ENCODE measurements at regions of chr3 and their contacts with region 1.

Region 1: DNA sequence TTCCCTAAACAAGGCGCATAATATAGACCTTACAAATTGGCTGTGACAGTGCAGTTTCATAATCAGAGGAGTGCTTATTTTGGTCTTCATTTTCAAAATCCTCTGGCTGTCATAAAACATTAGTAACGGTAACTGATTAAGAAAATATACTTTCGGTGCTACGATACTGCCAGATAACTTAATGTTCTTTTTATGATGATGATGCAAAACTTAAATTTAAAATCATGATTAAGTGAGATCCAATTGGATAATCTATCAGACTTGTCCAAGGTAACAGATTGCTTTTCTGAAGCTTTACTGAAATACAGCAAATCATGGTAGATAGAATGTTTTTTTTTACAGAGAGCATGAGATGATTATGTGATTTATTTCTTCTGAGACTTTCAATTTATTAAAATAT is 364.2 kb upstream of the CNTN3 start:
- DNase-seq: no peak
- H3K4me3 ChIP-seq: no peak overlapping the region
- H3K27ac ChIP-seq: no peak overlapping the region
- H3K4me1 ChIP-seq: no peaks in the 10 kb centered on the region
- H3K27me3 ChIP-seq: no peaks in the 10 kb centered on the region
- CTCF ChIP-seq: no peak
- POLR2A ChIP-seq: no peak

Region 2: DNA sequence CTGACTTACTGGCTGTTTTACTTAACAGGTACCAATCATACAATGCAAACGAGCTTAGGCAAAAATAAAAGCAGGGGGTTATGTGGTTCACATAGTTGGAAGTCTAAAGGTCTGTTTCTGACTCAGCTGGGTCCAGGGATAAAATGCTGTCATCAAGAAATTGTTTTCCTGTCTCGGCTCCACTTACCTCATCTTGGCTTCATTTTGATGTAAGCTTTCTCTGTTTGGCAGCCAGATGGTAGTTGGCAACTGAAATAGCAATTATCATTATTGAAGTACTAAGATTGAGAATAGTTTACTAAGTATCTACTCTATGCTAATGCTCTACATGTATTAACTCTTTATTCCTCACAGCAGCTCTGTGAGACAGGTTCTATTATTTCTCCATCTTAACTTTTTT is 327.4 kb before region 1 on chr3:
- CTCF ChIA-PET with region 1: no interaction called
- POLR2A ChIA-PET with region 1: no interaction called
- dilution Hi-C with region 1: no loop called
- intact Hi-C with region 1: no loop called
- DNase-seq: no peak
- H3K4me3 ChIP-seq: no peak overlapping the region
- H3K27ac ChIP-seq: no peak overlapping the region
- H3K4me1 ChIP-seq: no peaks in the 10 kb centered on the region
- H3K27me3 ChIP-seq: no peaks in the 10 kb centered on the region
- CTCF ChIP-seq: no peak
- POLR2A ChIP-seq: no peak

Region 3: DNA sequence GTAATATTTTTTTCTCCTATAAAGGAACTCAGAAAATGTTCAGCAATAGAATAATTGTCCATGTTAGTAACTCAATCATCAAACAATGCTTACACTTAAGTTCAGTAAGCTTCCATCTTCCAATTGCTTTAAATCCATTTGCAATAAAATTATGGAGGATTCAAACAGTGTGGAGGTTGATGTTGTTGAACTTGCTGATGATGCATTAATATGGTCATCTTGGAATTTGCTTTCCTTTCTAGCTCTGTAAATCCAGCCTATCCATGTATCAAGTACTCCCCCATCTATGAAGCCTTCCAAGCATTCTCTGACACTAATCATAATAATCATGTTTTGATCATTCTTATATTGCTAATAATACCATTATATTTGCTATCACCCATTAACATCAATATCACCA is 14.2 kb after region 1 on chr3:
- CTCF ChIA-PET with region 1: no interaction called
- POLR2A ChIA-PET with region 1: no interaction called
- dilution Hi-C with region 1: no loop called
- intact Hi-C with region 1: no loop called
- DNase-seq: no peak
- H3K4me3 ChIP-seq: no peak overlapping the region
- H3K27ac ChIP-seq: no peak overlapping the region
- H3K4me1 ChIP-seq: no peaks in the 10 kb centered on the region
- H3K27me3 ChIP-seq: no peaks in the 10 kb centered on the region
- CTCF ChIP-seq: no peak
- POLR2A ChIP-seq: no peak

Region 4: GRCh38 chr3:75035146-75035545 is 56.5 kb after region 1 on chr3:
- CTCF ChIA-PET with region 1: no interaction called
- POLR2A ChIA-PET with region 1: no interaction called
- dilution Hi-C with region 1: no loop called
- intact Hi-C with region 1: loop called (anchors 2 kb)
- DNase-seq: no peak
- H3K4me3 ChIP-seq: no peak overlapping the region
- H3K27ac ChIP-seq: no peak overlapping the region
- H3K4me1 ChIP-seq: no peaks in the 10 kb centered on the region
- H3K27me3 ChIP-seq: no peaks in the 10 kb centered on the region
- CTCF ChIP-seq: no peak
- POLR2A ChIP-seq: no peak